Activated T-helper 2 cell treated with anti-CD3 and anti-CD28 coated beads, Interferon-gamma antibody, Interleukin-2, Interleukin-4, amounts not matched to agents 10 μg/mL and 5 μg/mL and 100 μg/mL, durations not matched to agents 14 hours and 24 hours and 36 hours (primary cell): ENCODE measurements at regions of chr7 and their contacts with region 1.

Region 1: GRCh38 chr7:152675759-152676636 is at the start of gene XRCC2:
- DNase-seq: peak; percentile 94
- H3K4me3 Mint-ChIP-seq: peak within 1 kb of the TSS; percentile 93
- H3K27ac Mint-ChIP-seq: peak within 1 kb of the TSS; percentile 92
- H3K4me1 Mint-ChIP-seq: peaks cover 16% of the 10 kb centered on the region
- H3K27me3 Mint-ChIP-seq: no peaks in the 10 kb centered on the region
- total RNA-seq, gene XRCC2: 21.8 and 22.2 TPM in 2 replicates

Region 2: GRCh38 chr7:151631968-151632749 is 1043.8 kb before region 1 on chr7:
- intact Hi-C with region 1: loop called (anchors 5 kb)
- DNase-seq: peak; percentile 80
- H3K4me3 Mint-ChIP-seq: peak overlapping the region; percentile 84
- H3K27ac Mint-ChIP-seq: peak overlapping the region; percentile 89
- H3K4me1 Mint-ChIP-seq: peaks cover 16% of the 10 kb centered on the region
- H3K27me3 Mint-ChIP-seq: no peaks in the 10 kb centered on the region

Region 3: DNA sequence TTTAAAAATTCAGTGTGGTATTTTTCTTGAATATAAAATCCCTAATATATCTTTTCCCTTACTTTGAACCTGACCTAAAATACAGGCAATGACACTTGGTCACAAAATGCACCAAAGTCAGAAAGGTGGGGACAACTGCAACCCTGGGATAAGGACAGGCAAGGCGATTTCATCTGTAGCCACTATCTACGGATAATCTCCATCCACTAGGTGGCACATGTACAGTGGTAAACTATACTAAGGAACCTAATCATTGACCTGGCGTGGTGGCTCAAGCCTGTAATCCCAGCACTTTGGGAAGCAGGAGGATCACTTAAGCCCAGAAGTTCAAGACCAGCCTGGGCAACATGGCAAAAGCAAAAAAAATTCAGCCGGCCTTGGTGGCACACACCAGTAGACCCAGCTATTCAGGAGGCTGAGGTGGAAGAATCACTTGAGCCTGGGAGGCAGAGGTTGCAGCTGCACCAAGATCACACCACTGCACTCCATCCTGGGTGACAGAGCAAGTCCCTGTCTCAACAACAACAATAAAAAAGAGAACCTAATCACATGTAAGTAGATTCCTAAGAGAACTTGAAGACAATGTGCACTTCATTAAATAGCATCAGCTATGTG is 339.1 kb before region 1 on chr7:
- intact Hi-C with region 1: loop called (anchors 10 kb)
- DNase-seq: no peak
- H3K4me3 Mint-ChIP-seq: no peak overlapping the region
- H3K27ac Mint-ChIP-seq: no peak overlapping the region
- H3K4me1 Mint-ChIP-seq: peaks cover 20% of the 10 kb centered on the region
- H3K27me3 Mint-ChIP-seq: no peaks in the 10 kb centered on the region

Region 4: DNA sequence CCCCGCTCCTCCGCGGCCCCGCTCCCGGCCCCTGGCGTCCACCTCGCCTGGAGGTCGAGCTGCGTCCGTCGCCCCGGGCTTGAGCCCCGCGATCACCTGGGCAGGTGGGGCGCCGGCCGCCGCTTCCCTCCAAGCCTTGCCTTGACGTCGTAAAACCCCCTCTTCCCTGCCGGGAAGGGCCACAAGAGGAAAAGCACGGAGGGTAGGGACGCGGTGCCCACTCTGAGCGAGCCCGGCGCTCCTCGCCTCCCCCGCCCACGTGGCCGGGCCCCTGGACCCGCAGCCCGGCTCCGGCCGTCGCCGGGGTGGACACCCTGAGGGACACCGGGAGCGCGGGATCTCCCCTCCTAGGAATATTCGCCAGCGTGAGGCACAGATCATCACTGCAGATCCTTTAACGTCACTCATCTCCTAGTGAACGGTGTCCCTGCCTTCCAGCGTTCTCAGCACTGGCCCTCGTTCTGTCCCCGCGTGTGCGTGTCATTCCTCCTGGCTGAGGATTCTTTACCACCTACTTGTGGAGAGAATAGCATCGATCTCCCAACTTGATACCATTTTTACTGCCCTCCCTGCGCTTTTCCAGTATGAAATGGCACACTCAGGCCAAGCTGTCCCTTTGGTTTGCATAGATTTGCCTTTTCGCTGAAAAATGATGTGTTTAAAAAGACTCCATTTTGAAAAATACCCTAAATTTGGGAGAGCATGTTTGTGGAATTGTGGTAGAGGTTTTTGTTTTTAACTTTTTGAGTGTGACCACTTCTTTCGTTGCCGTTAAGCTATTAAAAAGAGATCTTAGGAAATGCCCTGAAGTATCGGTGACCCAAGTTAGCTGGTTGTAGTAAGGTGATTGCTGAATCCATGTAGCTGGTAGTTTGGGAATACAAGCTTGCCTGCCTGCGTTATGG is 84.2 kb after region 1 on chr7:
- intact Hi-C with region 1: loop called (anchors 2 kb)
- DNase-seq: peak; percentile 9
- H3K4me3 Mint-ChIP-seq: peak overlapping the region; percentile 91
- H3K27ac Mint-ChIP-seq: peak overlapping the region; percentile 84
- H3K4me1 Mint-ChIP-seq: peaks cover 18% of the 10 kb centered on the region
- H3K27me3 Mint-ChIP-seq: no peaks in the 10 kb centered on the region